Gastrocnemius medialis (tissue), 4 donors: ENCODE measurements at regions of chr1 and their contacts with region 1.

Region 1: GRCh38 chr1:215181518-215181917 is 99.0 kb downstream of the KCNK2 start:
- DNase-seq: no peak
- ATAC-seq: no peak
- H3K4me3 ChIP-seq: no peak overlapping the region
- H3K27ac ChIP-seq: no peak overlapping the region
- H3K4me1 ChIP-seq: no peaks in the 10 kb centered on the region
- H3K27me3 ChIP-seq: no peaks in the 10 kb centered on the region
- CTCF ChIP-seq: no peak
- POLR2A ChIP-seq: no peak

Region 2: DNA sequence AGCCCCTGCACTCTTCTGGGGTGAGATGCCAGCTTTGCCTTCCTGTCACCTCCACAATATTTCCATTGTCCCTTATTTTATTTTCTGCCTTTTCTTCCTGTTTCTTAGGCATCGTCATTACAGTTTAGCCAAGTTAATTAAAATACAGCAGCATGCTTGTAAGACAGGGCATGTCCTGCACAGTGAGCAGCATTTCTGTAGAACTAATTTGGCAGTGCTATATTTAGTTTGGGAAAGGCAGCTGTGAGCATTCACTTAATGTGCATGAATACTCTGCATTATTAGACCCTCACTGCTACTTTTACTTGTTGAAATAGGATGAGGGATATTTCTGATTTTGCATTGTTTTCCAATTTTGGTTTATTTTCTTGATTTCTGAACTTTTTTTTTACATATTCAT is 34.3 kb after region 1 on chr1:
- in situ Hi-C with region 1: loop called in 1 of 4 experiments (anchors 5 kb)
- intact Hi-C with region 1: no loop called
- DNase-seq: no peak
- ATAC-seq: no peak
- H3K4me3 ChIP-seq: no peak overlapping the region
- H3K27ac ChIP-seq: no peak overlapping the region
- H3K4me1 ChIP-seq: no peaks in the 10 kb centered on the region
- H3K27me3 ChIP-seq: no peaks in the 10 kb centered on the region
- CTCF ChIP-seq: no peak
- POLR2A ChIP-seq: no peak